ENCODE measurements at regions of chr4 and their contacts with region 1.

Region 1: DNA sequence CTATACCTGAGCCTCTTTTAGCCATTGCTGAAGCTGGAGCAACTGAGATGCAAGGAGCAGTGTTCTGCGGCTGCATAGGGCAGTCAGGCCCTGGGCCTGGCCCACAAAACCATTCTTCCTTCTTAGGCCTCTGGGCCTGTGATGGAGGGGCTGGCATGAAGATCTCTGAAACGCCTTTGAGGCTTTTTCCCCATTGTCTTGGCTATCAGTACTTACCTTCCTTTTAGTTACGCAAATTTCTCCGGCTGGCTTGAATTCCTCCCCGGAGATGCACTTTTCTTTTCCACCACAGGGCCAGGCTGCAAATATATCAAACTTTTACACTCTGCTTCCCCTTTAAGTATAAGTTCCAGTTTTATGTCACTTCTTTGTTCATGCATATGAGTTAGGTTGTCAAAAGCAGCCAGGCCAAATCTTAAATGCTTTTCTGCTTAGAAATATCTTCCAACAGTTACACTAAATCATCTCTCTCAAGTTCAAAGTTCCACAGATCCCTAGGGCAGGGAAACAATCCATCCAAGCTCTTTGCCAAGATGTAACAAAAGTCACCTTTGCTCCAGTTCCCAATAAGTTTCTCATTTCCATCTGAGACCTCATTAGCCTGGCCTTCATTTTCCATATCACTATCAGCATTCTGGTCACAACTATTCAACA is 194.4 kb upstream of the PCDH7 start:
- DNase-seq: no peak
- H3K4me3 ChIP-seq: no peak overlapping the region
- H3K27ac ChIP-seq: no peak overlapping the region
- H3K4me1 ChIP-seq: no peaks in the 10 kb centered on the region
- H3K27me3 ChIP-seq: no peaks in the 10 kb centered on the region
- CTCF ChIP-seq: no peak
- EP300 ChIP-seq: no peak
- POLR2A ChIP-seq: no peak

Region 2: GRCh38 chr4:29467044-29467717 is 1058.6 kb before region 1 on chr4:
- in situ Hi-C with region 1: no loop called
- intact Hi-C with region 1: no loop called
- DNase-seq: no peak
- H3K4me3 ChIP-seq: no peak overlapping the region
- H3K27ac ChIP-seq: no peak overlapping the region
- H3K4me1 ChIP-seq: no peaks in the 10 kb centered on the region
- H3K27me3 ChIP-seq: no peaks in the 10 kb centered on the region
- CTCF ChIP-seq: no peak
- EP300 ChIP-seq: no peak
- POLR2A ChIP-seq: no peak

Region 3: DNA sequence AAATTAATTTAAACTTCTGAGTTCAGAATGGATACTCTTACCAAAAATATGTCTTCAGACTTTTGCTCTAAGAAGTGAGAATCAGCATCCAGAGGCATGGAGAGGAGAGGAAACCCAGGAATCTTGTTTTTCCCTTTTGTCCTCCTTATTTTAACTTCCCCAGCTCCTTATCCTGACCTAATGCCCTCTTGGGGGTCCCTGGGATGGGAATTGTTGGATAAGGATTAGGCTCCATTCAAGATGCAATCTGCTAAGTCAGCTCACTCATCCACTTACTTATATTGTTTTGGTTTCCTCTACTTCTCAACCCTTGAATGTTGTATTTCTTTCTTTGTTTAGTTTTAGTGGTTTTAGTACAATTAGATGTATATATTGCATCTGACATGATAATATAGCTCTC is 14.0 kb before region 1 on chr4:
- in situ Hi-C with region 1: no loop called
- intact Hi-C with region 1: loop called (anchors 1 kb)
- DNase-seq: no peak
- H3K4me3 ChIP-seq: no peak overlapping the region
- H3K27ac ChIP-seq: no peak overlapping the region
- H3K4me1 ChIP-seq: no peaks in the 10 kb centered on the region
- H3K27me3 ChIP-seq: no peaks in the 10 kb centered on the region
- CTCF ChIP-seq: no peak
- EP300 ChIP-seq: no peak
- POLR2A ChIP-seq: no peak

Region 4: DNA sequence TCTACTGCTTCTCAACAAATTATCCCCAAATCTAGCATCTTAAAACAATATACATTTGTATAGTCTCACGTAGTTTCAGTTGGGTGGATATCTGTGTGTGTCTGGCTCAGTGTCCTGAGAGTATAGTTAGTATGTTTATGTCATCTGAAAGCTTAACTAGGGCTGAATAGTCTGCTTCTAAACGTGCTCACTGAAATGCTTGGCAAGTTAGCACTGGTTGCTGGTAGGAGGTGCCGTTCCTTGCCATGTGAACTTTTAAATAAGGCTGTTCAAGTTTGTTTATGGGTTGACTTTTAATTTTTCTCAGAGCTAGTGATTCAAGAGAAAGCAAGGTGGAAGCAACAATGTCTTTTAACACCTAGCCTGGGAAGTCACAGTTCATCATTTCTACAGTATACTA is 1868.0 kb after region 1 on chr4:
- in situ Hi-C with region 1: no loop called
- intact Hi-C with region 1: no loop called
- DNase-seq: no peak
- H3K4me3 ChIP-seq: no peak overlapping the region
- H3K27ac ChIP-seq: no peak overlapping the region
- H3K4me1 ChIP-seq: no peaks in the 10 kb centered on the region
- H3K27me3 ChIP-seq: no peaks in the 10 kb centered on the region
- CTCF ChIP-seq: no peak
- EP300 ChIP-seq: no peak
- POLR2A ChIP-seq: no peak